BJ (cell line): ENCODE measurements at regions of chr9 and their contacts with region 1.

Region 1: DNA sequence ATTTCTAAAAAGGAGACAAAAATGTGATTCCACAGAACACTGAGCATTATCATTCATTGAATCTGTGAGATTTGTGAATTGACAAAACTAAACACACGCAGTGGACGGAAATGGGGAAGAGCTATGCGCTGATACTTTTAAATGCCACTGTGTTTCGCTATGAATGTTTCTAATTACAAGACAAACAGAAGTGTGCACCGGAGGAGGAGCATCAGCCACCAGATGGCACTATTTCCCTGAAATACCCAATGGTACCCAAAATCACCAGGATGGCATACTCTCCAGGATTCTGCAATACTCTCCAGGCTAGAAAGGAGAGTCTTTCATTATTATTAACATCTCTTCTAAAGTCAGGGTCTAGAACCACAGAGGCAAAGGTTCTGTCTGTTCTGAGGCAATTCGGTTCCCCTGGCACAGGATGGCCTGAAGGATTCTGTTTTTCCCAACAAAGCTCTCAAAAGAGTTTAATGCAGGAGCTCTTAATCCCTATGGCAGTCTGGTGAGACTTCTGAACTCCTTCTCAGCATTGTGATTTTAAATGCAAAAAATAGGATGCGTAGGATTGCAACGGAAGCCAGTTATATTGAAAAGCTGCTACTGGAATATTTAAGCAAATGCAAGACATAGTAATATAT is 13.8 kb upstream of the PUM3 start:
- DNase-seq: no peak
- H3K4me3 ChIP-seq: no peak overlapping the region
- H3K27me3 ChIP-seq: peaks cover 1% of the 10 kb centered on the region; the same call in 1 of the 2 replicates
- CTCF ChIP-seq: peak; percentile 82

Region 2: GRCh38 chr9:2872257-2872935 is 14.7 kb after region 1 on chr9:
- CTCF ChIA-PET with region 1: interaction called, 47 read pairs
- POLR2A ChIA-PET with region 1: no interaction called
- DNase-seq: no peak
- H3K4me3 ChIP-seq: no peak overlapping the region
- H3K27me3 ChIP-seq: peaks cover 2% of the 10 kb centered on the region; the same call in 1 of the 2 replicates
- CTCF ChIP-seq: peak; percentile 38

Region 3: DNA sequence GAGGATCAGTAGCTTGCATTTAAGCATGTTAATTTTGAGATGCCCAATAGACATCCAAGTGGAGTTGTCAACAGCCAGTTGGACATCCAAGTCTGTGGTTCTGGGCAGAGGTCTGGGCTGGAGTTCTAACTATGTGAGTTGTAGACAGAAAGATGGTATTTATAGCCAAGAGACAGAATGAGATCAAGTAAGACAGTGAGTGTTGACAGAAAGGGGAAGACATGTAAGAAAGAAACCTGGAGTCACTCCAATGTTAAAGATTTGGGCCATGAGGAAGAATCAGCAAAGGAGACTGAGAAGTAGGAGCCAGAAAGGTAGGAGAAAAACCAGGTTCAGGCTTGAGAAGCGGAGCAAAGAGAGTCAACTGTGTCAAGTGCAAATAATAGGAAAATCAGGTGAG is 81.7 kb after region 1 on chr9:
- CTCF ChIA-PET with region 1: no interaction called
- POLR2A ChIA-PET with region 1: no interaction called
- DNase-seq: no peak
- H3K4me3 ChIP-seq: no peak overlapping the region
- H3K27me3 ChIP-seq: no peaks in the 10 kb centered on the region; the same call in 1 of the 2 replicates
- CTCF ChIP-seq: no peak

Region 4: DNA sequence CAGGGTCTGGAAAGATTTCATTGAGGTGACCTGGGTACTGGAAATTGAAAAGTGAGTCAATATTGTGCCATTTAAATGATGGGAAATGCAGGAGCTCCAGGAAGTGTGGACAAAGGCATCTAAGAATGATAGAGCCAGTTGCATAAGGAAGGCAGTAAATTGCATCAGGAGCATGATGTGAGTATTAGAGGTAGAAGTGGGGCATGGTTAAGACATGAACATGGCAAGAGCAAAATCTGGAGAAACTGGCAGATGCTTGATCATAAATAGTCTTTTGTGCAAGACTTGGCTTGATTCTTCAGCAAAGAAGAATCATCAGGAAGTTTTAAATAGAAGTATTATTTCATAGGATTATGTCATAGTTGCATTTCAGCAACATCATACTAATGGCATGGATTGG is 143.6 kb after region 1 on chr9:
- CTCF ChIA-PET with region 1: no interaction called
- POLR2A ChIA-PET with region 1: no interaction called
- DNase-seq: no peak
- H3K4me3 ChIP-seq: no peak overlapping the region
- H3K27me3 ChIP-seq: peaks cover 2% of the 10 kb centered on the region; the same call in 1 of the 2 replicates
- CTCF ChIP-seq: no peak

Region 5: DNA sequence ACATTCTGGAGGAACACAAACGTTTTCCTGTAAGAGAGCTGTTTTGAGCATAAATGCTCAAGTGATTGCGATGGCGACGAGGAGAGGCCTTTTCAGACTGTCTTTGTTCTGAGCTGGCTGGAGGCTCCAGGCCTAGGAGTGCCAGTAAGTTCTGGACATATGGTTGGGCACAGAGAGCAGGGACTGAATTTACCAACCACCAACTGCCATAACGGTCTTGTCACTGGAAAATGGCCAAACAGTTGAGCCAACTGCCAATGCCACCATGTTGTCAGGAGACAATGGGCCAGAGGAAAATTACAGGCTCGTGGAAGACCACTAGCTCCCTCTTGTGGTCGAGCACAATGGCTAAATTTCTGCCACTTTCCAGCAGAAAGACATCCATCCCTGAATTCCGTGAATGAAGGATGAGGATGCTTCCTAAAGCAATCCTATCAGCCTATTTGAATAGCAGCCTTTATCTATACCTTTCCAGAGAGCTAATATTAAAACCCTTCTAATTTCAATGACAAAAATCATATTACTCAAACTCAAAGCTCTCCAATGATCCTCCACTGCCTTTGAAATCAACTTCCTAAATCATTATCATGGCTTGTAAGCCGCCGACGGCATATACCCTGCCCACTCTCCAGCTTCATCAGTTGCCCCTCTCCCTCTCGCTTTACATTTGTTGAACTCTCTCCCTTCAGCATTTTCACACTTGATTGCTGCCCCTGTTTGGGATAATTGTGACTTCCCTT is 1509.1 kb after region 1 on chr9:
- CTCF ChIA-PET with region 1: interaction called, 10 read pairs
- POLR2A ChIA-PET with region 1: no interaction called
- DNase-seq: no peak
- H3K4me3 ChIP-seq: no peak overlapping the region
- H3K27me3 ChIP-seq: peaks cover 2% of the 10 kb centered on the region
- CTCF ChIP-seq: peak; percentile 87

Region 6: GRCh38 chr9:4375424-4376200 is 1517.9 kb after region 1 on chr9:
- CTCF ChIA-PET with region 1: interaction called, 20 read pairs
- POLR2A ChIA-PET with region 1: no interaction called
- DNase-seq: peak; percentile 85
- H3K4me3 ChIP-seq: no peak overlapping the region
- H3K27me3 ChIP-seq: no peaks in the 10 kb centered on the region; the same call in 1 of the 2 replicates
- CTCF ChIP-seq: peak; percentile 56